Activated naive CD4-positive, alpha-beta T cell treated with anti-CD3 and anti-CD28 coated beads for 36 hours (primary cell): ENCODE measurements at regions of chr7 and their contacts with region 1.

Region 1: DNA sequence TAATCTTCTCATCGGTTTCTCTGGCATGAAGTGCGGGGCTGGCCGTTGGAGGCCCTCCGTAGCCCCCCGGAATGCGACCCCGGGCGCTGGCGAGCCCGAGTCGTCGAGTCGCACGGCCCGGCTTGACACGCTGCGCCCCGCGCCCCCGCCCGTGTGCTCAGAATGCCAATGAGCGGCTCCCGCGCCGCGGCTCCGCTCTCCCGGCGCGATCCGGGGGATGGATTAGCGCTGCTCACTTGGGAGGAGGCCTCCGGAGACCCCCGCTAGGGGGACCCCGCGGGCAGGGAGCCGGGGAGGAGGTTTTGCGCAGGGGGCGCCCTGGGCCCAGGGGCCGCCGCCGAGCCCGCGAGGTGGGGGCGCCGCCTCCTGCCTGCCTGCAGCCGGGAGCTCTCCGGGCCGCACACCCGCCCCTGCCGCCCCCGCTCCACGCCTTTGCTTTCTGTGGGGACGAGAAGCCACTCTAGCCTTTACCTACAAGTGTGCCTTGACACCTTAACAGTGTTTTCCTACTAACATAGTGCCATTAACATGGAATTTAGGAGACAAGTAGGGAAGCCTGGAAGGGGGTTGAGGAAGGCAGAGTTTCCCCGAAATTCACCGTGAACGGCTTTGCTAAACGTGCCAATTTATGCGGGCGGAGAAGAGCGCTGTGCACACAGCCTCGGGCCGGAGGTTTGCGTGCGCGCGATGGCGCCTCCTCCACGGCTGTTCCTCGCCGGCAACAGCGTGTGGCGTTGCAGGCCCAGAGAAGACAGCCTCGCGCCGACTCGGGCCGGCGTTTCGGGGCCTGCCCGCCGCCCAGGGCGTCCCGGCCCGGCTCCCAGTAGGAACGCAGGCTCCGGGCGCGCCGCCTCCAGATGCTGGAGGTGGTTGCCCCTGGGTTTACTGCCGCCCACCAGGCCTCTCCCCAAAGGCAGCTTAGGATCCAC is 7.1 kb downstream of the SHH start:
- DNase-seq: peak; percentile 65
- H3K4me3 Mint-ChIP-seq: peak overlapping the region; percentile 17
- H3K27ac Mint-ChIP-seq: no peak overlapping the region
- H3K4me1 Mint-ChIP-seq: peaks cover 25% of the 10 kb centered on the region
- H3K27me3 Mint-ChIP-seq: peaks cover 54% of the 10 kb centered on the region

Region 2: GRCh38 chr7:155456738-155457564 is 348.2 kb before region 1 on chr7:
- CTCF ChIA-PET with region 1: no interaction called
- intact Hi-C with region 1: loop called (anchors 5 kb)
- DNase-seq: peak; percentile 45
- H3K4me3 Mint-ChIP-seq: peak overlapping the region; percentile 63
- H3K27ac Mint-ChIP-seq: peak overlapping the region; percentile 18
- H3K4me1 Mint-ChIP-seq: peaks cover 22% of the 10 kb centered on the region
- H3K27me3 Mint-ChIP-seq: peaks cover 75% of the 10 kb centered on the region

Region 3: DNA sequence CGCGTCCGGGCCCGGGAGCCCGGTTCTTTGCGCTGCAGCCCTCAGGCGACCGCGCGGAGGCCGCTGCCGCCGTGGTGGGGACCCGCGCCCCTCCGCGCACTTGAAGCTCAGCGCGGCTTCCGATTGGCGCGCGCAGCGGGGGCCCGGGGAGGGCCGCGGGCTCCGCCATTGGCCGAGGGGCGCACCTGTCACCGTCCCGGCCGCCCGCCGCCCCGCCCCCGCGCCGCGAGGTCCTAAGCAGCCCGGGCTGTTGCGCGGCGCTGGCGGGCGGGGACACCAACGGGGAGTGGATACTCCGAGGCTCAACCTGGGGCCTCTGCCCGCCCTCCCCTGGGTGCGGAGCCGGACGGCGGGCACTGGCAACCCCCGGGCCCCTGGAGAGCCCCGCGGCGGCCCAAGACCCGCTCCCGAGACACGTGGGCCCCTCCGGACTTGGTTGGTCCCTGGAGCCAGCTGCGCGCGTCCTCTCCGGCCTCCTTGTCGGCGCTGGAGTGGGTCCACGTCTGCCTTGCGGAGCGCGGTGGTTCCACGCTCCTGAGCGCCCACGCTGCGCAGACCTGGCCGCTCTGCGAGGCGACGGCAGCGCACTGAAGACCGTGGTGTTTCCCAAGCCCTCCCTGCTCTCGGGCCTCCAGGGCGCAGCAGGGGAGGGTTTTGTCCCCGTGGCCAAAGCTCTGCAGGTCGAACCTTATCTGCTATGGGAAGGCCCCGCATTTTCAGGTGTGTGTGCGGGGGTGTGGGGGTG is 1205.6 kb after region 1 on chr7 and contains the start of gene MNX1:
- CTCF ChIA-PET with region 1: no interaction called
- intact Hi-C with region 1: loop called (anchors 5 kb)
- DNase-seq: peak; percentile 51
- H3K4me3 Mint-ChIP-seq: peak within 1 kb of the TSS; percentile 46
- H3K27ac Mint-ChIP-seq: no peak within 1 kb of the TSS
- H3K4me1 Mint-ChIP-seq: peaks cover 12% of the 10 kb centered on the region
- H3K27me3 Mint-ChIP-seq: peaks cover 82% of the 10 kb centered on the region
- total RNA-seq, gene MNX1: 0.10 TPM in 1 of 2 experiments, not detected in the other